PC-9 (cell line): ENCODE measurements at regions of chr12 and their contacts with region 1.

Region 1: DNA sequence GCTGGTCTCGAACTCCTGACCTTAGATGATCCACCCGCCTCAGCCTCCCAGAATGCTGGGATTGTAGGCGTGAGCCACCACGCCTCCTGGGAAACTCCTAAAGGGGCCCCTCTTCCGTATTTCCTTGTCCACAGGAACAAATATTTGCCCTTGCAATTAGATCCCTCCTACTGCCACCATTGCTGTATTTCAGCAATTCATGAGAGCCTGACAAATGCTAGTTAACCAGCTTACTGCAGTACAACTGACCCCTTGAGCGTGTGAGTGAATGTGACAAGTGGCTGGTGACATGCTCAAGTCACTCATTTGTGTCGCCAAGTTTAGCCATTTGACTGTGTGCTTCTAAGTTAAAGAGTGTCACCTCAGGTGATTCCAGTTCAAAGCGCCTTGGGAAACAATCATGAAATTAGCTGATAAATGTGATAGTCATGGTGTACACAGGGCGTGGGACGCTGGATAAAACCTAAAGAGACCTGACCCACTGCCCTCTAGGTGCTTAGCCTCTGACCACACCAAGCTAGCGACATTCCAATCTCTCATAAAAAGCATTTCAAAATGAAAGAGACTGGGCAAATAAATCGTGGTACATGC is 56.1 kb upstream of the MAP1LC3B2 start:
- DNase-seq: peak; percentile 76 to 100
- H3K4me3 ChIP-seq: no peak overlapping the region; the same call in 1 of the 2 replicates
- H3K27ac ChIP-seq: peak overlapping the region; percentile 90
- H3K4me1 ChIP-seq: peaks cover 17% of the 10 kb centered on the region
- H3K27me3 ChIP-seq: no peaks in the 10 kb centered on the region
- CTCF ChIP-seq: no peak

Region 2: DNA sequence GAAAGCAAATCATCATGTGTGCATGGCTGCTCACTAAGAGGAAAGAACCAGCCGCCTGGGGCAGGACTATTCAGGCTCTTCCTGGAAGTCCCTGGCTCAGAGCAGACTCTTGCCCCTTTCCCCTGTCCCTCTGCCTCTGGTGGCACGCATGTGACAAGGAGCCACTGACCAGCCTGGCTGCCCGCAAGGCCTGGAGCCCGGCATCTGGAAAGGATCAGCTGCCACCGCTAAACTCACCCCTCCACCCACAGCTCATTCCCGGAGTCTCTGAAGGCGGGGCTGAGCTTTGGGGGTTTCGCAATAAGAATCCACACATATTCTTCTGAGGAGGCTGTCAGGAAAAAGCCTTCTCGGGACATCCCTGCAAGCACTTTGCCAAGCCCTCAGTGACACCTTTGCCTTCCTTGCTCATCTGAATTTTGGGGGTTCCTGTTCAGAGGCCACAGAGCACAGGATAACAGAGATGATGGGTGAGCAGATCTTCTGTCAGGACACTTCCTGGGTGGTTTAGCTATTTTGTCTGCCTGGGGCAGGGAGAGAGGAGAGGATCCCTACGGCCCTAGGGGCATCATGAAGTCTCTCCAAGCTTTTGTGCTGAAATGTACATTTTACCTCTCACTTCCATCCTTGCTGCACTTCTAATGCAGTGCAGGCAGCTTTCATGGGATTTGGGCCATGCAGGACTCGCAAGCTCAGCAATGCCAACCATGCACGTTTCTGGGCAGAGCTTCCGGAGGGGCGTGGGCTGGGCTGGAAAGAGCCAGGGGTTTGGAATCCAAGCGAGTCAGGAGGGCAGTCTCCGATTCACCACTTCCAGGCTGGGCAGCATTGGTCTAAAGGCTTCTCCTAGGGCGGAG is 68.7 kb before region 1 on chr12:
- CTCF ChIA-PET with region 1: no interaction called
- POLR2A ChIA-PET with region 1: interaction called, 3 read pairs
- intact Hi-C with region 1: loop called (anchors 1 kb)
- DNase-seq: peak; percentile 94
- H3K4me3 ChIP-seq: peak overlapping the region; percentile 42; the same call in 1 of the 2 replicates
- H3K27ac ChIP-seq: peak overlapping the region; percentile 80
- H3K4me1 ChIP-seq: peaks cover 24% of the 10 kb centered on the region
- H3K27me3 ChIP-seq: no peaks in the 10 kb centered on the region
- CTCF ChIP-seq: no peak

Region 3: GRCh38 chr12:116559162-116559935 is 56.3 kb after region 1 on chr12 and contains the start of gene MAP1LC3B2:
- CTCF ChIA-PET with region 1: no interaction called
- POLR2A ChIA-PET with region 1: no interaction called
- intact Hi-C with region 1: loop called (anchors 1 kb)
- DNase-seq: peak; percentile 88 to 95
- H3K4me3 ChIP-seq: peak within 1 kb of the TSS; percentile 18; the same call in 1 of the 2 replicates
- H3K27ac ChIP-seq: peak within 1 kb of the TSS; percentile 87
- H3K4me1 ChIP-seq: peaks cover 23% of the 10 kb centered on the region
- H3K27me3 ChIP-seq: no peaks in the 10 kb centered on the region
- CTCF ChIP-seq: no peak
- total RNA-seq, gene MAP1LC3B2: 1.1 and 1.4 TPM in 2 replicates

Region 4: DNA sequence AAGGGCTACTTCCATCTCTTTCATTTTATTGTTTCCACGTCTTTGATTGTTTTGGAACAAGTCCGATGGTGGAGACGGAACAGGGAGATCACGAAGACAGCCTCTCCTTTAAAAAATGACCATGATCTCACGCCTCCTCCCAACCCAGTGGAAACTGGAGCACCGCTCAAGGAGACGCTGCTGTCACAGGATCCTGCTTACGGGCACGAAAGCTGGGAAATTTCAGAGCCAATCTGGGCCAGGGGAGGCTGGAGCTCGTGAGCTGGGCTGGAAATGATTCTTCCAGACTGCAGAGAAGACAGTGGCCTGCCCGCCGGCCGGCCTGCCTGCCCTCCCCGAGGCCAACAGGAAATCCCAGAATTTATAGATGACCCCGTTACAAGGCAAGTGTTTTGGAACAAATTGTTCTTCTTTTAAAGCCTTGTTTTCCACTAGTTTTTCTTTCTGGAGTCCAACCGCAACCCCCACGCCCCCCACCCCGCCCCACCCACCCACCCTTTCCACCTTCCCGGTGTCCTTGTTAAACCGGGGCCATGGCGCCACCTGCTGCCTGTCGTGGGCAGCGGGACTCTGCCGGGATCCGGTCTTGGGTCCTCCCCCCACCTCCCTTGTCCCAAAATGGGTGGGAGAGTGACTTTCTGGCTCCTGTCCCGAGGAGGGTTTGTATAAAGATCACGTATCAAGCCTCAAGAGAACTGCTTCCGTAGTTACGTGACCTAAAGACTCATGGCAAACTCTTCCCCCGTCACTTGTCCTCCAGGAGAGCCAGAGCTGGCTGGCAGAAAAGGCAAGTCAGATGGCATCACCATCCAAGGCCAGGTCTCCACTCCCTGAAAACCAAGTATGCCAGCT is 96.5 kb after region 1 on chr12:
- CTCF ChIA-PET with region 1: no interaction called
- POLR2A ChIA-PET with region 1: no interaction called
- intact Hi-C with region 1: loop called (anchors 2 kb)
- DNase-seq: peak in 1 of 2 experiments; percentile 55
- H3K4me3 ChIP-seq: no peak overlapping the region
- H3K27ac ChIP-seq: no peak overlapping the region
- H3K4me1 ChIP-seq: peaks cover 10% of the 10 kb centered on the region
- H3K27me3 ChIP-seq: no peaks in the 10 kb centered on the region
- CTCF ChIP-seq: peak; percentile 42; the same call in 1 of the 2 replicates

Region 5: DNA sequence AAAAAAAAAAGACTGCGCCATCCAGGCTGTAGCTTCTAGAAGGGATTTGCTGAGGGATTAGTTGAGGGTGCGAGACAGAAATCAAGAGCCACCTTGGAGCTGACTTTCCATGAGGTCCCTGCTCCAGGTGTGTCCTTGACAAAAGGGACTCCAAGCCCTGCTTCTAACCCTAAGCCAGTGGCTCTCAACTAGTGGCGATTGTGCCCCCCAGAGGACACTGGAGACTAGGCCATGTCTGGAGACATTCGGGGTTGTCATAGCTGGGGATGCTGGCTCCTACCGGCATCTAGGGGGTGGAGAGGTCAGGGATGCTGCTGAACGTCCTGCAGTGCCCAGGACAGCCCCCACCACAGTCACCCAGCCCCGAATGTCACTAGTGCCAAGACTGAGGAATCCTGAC is 194.3 kb after region 1 on chr12:
- CTCF ChIA-PET with region 1: no interaction called
- POLR2A ChIA-PET with region 1: no interaction called
- intact Hi-C with region 1: loop called (anchors 5 kb)
- DNase-seq: peak in 1 of 2 experiments; percentile 23
- H3K4me3 ChIP-seq: no peak overlapping the region
- H3K27ac ChIP-seq: no peak overlapping the region
- H3K4me1 ChIP-seq: peaks cover 30% of the 10 kb centered on the region
- H3K27me3 ChIP-seq: no peaks in the 10 kb centered on the region
- CTCF ChIP-seq: no peak; the same call in 1 of the 2 replicates